T-cell (primary cell): ENCODE measurements at regions of chr3 and their contacts with region 1.

Region 1: GRCh38 chr3:71430941-71431552 is 152.5 kb downstream of the FOXP1 start:
- DNase-seq: no peak
- ATAC-seq: peak in 3 of 4 experiments; percentile 55 to 57 (median 57)
- H3K4me3 ChIP-seq: no peak overlapping the region
- H3K4me3 Mint-ChIP-seq: peak overlapping the region in 1 of 3 donors; percentile 84
- H3K27ac ChIP-seq: peak overlapping the region; percentile 73
- H3K27ac Mint-ChIP-seq: peak overlapping the region; percentile 95 to 97
- H3K4me1 ChIP-seq: peaks cover 43 to 58% of the 10 kb centered on the region in 2 experiments
- H3K4me1 Mint-ChIP-seq: peaks cover 88 to 94% (median 90%) of the 10 kb centered on the region in 3 donors
- H3K27me3 ChIP-seq: no peaks in the 10 kb centered on the region
- H3K27me3 Mint-ChIP-seq: no peaks in the 10 kb centered on the region

Region 2: GRCh38 chr3:71202848-71203533 is 228.1 kb before region 1 on chr3:
- CTCF ChIA-PET with region 1: no interaction called
- POLR2A ChIA-PET with region 1: interaction called in 1 of 2 experiments, 10 read pairs
- DNase-seq: no peak
- ATAC-seq: peak in 1 of 4 experiments; percentile 29
- H3K4me3 ChIP-seq: no peak overlapping the region
- H3K4me3 Mint-ChIP-seq: no peak overlapping the region
- H3K27ac ChIP-seq: no peak overlapping the region
- H3K27ac Mint-ChIP-seq: peak overlapping the region in 1 of 2 donors; percentile 9
- H3K4me1 ChIP-seq: peaks cover 5% of the 10 kb centered on the region in 2 experiments
- H3K4me1 Mint-ChIP-seq: peaks cover 63 to 71% (median 69%) of the 10 kb centered on the region in 3 donors
- H3K27me3 ChIP-seq: no peaks in the 10 kb centered on the region
- H3K27me3 Mint-ChIP-seq: no peaks in the 10 kb centered on the region

Region 3: DNA sequence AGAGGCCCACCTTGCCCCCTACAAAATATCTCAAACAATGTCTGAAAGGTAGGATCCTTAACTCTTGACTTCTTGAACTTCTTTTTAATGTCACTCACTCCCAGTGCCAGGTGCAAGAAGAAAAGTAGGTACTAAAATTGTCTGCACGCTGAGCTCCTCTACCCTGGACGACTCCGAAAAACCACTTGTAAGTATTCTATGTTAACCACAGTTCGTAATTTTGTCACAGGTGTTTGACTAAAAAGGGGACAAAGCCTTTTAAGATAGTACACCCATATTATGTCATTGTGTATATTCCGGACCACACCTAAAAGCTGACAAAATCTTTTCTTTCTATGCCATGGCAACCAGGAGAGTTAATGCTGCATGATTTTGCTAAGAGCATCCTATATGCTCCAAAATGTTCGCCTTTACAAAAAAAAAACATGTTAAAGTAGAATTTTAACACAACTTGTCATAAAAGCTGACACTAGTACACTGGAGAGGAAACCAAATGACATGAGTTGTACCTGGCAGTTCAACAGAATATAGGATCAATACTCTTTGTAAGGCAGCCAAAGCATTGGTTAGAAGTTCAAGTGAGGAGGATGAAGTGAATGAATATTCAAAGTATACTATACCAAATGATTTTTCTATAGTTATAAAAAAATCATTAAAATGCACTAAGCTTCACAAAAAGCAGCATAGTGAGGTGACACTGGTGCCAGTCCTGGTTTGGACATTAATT is 58.0 kb before region 1 on chr3:
- CTCF ChIA-PET with region 1: no interaction called
- POLR2A ChIA-PET with region 1: interaction called in 1 of 2 experiments, 13 read pairs
- DNase-seq: peak in 27 of 35 experiments; percentile 16 to 78 (median 45)
- ATAC-seq: peak; percentile 90 to 95 (median 94)
- H3K4me3 ChIP-seq: peak overlapping the region in 1 of 2 donors; percentile 5
- H3K4me3 Mint-ChIP-seq: peak overlapping the region; percentile 11 to 51 (median 25)
- H3K27ac ChIP-seq: peak overlapping the region; percentile 86
- H3K27ac Mint-ChIP-seq: peak overlapping the region; percentile 90 to 91
- H3K4me1 ChIP-seq: peaks cover 35 to 38% of the 10 kb centered on the region in 2 experiments
- H3K4me1 Mint-ChIP-seq: peaks cover 81 to 90% (median 86%) of the 10 kb centered on the region in 3 donors
- H3K27me3 ChIP-seq: no peaks in the 10 kb centered on the region
- H3K27me3 Mint-ChIP-seq: no peaks in the 10 kb centered on the region

Region 4: DNA sequence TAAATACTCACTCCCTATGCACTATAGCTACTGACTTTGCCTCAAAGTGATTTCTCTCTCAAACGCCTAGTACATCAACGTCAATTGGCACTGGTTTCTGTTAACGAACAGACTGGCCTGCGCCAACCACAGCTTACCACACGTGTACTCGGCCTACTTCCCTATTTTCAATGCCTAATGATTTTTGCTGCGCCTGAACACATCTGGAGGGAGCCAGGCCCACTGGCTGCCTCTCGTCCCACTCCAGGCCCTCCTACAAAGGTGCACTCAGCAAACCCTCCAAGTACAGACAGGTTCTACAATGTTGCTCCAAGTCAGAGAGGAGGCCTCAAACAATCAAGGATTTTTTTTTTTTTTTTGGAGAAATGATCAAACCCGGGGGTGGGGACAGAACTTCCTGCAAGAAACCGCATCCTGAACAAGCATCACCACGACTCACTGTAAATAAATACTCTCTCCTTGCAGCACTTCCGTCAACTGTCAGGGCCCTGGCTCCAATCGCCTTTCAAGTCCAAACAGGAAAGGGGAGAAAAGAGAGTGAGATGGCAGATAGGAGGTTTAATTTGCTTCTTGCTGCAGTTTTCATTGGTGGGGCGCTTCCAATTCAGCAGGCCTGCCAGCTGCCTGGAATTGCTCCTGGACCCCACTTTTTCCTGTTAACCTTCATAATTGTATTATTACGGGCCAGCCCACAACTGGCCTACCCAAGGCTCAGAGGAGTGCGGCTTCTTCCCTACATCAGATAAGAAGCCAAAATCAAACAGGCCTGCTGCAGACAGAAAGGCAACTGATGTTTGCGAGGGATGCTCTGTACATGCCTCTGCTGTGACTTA is 13.2 kb after region 1 on chr3:
- CTCF ChIA-PET with region 1: interaction called, 3 to 5 read pairs
- POLR2A ChIA-PET with region 1: interaction called, 3 to 25 read pairs
- DNase-seq: peak; percentile 62 to 91 (median 77)
- ATAC-seq: peak; percentile 82 to 88 (median 86)
- H3K4me3 ChIP-seq: peak overlapping the region in 1 of 2 donors; percentile 44
- H3K4me3 Mint-ChIP-seq: peak overlapping the region; percentile 69 to 75 (median 70)
- H3K27ac ChIP-seq: peak overlapping the region; percentile 94
- H3K27ac Mint-ChIP-seq: peak overlapping the region; percentile 97 to 99
- H3K4me1 ChIP-seq: peaks cover 86 to 95% of the 10 kb centered on the region in 2 experiments
- H3K4me1 Mint-ChIP-seq: peaks cover 96 to 100% (median 96%) of the 10 kb centered on the region in 3 donors
- H3K27me3 ChIP-seq: no peaks in the 10 kb centered on the region
- H3K27me3 Mint-ChIP-seq: no peaks in the 10 kb centered on the region

Region 5: GRCh38 chr3:71478568-71478967 is 47.5 kb after region 1 on chr3:
- CTCF ChIA-PET with region 1: interaction called, 3 to 4 read pairs
- POLR2A ChIA-PET with region 1: interaction called in 1 of 2 experiments, 15 read pairs
- DNase-seq: peak in 19 of 35 experiments; percentile 14 to 67 (median 39)
- ATAC-seq: peak; percentile 74 to 87 (median 80)
- H3K4me3 ChIP-seq: no peak overlapping the region
- H3K4me3 Mint-ChIP-seq: peak overlapping the region in 2 of 3 donors; percentile 71 to 77
- H3K27ac ChIP-seq: no peak overlapping the region
- H3K27ac Mint-ChIP-seq: peak overlapping the region; percentile 82 to 99
- H3K4me1 ChIP-seq: peaks cover 21 to 41% of the 10 kb centered on the region in 2 experiments
- H3K4me1 Mint-ChIP-seq: peaks cover 84 to 92% (median 87%) of the 10 kb centered on the region in 3 donors
- H3K27me3 ChIP-seq: no peaks in the 10 kb centered on the region
- H3K27me3 Mint-ChIP-seq: no peaks in the 10 kb centered on the region

Region 6: DNA sequence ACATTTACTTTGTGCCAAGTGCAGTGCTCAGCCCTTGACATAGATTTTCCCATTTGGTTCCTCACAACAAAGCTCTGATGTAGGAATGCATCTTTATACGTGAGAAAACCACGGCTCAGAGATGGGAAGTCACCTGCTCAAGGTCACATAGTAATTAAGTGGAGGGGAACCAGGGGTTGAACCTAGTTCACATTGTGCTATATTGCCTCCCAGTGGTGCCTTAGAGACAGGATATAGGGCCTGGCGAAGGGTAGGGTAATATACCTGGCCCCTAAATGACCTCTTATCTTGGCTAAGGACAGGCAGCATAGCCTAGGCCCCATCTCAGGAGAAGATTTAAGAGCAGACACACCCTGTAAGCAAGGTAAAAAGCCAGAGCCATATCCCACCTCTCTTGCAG is 81.0 kb after region 1 on chr3:
- CTCF ChIA-PET with region 1: no interaction called
- POLR2A ChIA-PET with region 1: interaction called in 1 of 2 experiments, 13 read pairs
- DNase-seq: peak in 32 of 35 experiments; percentile 5 to 83 (median 43)
- ATAC-seq: peak; percentile 94 to 100 (median 98)
- H3K4me3 ChIP-seq: no peak overlapping the region
- H3K4me3 Mint-ChIP-seq: peak overlapping the region in 1 of 3 donors; percentile 25
- H3K27ac ChIP-seq: peak overlapping the region; percentile 32
- H3K27ac Mint-ChIP-seq: peak overlapping the region; percentile 56 to 75
- H3K4me1 ChIP-seq: peaks cover 16 to 17% of the 10 kb centered on the region in 2 experiments
- H3K4me1 Mint-ChIP-seq: peaks cover 10 to 47% (median 16%) of the 10 kb centered on the region in 3 donors
- H3K27me3 ChIP-seq: no peaks in the 10 kb centered on the region
- H3K27me3 Mint-ChIP-seq: no peaks in the 10 kb centered on the region